Left cardiac atrium (tissue), 4 donors: ENCODE measurements at regions of chr10 and their contacts with region 1.

Region 1: DNA sequence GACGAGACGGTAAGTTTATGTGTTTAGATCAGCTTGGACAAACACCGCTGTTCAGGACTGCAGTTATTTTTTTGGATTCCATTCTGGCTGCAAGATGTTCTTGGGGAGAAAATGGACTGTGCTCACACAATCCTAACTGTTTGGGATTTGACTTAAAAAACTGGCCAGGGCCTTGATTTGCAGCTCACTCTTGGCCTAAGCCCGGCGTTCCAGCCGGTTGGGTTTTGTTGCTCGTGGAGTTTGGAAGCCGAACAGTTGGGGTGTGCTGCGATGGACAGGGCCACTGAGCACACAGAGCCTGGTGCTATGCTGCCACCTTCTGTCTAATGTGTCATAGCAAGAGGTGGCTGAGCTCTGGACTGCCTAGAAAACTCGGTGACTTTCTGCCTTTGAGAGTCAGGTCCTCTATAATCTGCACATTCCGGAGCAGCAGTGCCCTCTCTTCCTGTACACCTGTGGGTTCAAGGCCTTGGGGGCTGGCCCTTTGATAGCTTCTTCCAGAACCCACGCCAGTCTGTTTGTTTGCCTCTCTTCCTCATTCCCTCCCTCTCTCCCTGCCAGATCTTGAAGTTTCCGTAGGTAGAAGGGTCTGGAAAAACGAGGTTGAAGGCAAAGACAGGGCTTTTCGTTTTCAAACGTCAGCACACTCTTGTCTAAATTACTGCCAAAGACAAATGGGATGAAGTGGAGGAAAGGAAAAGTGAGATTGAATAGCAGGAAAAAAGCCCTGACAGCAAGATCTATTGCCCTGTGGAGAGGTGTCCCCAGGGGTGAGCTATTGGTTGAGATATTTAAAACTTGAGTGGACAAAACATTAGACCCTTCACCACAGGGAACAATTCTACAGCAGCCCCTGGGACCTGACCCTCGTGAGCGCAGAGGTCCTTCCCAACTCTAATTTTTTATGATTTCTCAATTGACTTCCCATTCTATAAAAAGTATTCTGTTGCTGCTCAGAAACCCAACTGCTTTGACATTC is 167.5 kb upstream of the HABP2 start:
- DNase-seq: peak; percentile 85
- ATAC-seq: peak; percentile 98 to 99

Region 2: DNA sequence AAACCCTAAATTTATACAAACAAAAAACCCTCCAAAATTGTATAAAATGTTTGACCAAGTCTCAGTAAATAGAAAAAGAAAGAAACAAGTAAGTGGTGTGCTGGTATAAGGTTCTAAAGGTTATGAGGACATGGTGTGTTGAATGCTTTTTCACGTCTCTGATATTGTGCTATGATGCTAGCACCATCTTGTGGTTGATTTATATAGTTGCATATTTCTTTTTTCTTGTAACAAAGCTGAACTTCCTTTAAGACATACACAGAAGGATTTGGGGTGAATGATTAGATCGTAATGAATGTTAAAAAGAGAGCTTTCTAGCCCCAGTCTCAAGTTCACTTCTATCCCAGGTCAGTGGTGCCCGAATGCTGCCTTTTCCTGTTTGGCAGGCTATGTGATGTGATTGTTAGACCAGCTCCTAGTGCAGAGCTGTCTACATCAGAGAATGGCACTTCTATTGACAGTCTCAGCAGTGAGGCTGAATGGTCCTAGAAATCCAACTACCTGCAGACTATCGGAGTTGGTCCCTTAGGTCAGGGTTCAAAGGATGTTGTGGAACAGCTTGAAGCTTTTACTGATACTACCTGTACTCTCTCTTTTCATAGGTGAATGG is 913.3 kb before region 1 on chr10:
- intact Hi-C with region 1: loop called in 1 of 2 experiments (anchors 5 kb)
- DNase-seq: no peak
- ATAC-seq: peak; percentile 53 to 59

Region 3: DNA sequence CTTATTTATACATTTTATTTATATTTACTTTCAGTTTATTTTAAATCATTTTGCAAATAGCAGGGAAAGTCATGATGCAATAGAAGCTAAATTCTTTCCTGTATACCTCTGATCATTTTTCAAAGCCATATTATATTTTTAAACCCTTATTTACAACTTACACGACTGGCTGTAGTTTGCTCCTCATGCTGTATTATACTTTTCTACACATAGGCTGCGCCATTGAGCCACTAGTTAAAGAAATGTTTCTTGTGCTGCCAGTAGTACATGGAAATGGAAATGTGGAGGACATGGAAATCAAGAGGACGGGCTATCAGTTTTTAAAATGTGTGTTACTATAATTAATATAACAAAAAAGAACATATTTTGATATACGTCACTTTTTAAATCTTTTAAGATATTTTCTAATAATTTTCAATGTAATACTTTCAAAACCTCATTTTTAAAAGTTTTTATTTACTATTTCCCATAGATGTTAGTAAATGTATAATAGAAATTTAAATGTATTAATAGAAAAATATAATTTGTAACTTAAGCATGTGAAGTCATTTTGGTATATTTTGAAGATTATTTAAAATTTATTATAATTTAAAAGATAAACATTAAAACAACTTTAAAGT is 819.8 kb before region 1 on chr10:
- intact Hi-C with region 1: loop called in 1 of 2 experiments (anchors 10 kb)
- DNase-seq: no peak
- ATAC-seq: peak; percentile 41 to 55

Region 4: GRCh38 chr10:112721080-112721698 is 664.1 kb before region 1 on chr10:
- intact Hi-C with region 1: loop called (anchors 2 to 10 kb)
- DNase-seq: no peak
- ATAC-seq: peak; percentile 53 to 68

Region 5: GRCh38 chr10:113139699-113140098 is 245.6 kb before region 1 on chr10:
- intact Hi-C with region 1: loop called in 1 of 2 experiments (anchors 10 kb)
- DNase-seq: no peak
- ATAC-seq: no peak

Region 6: GRCh38 chr10:113273181-113274163 is 111.8 kb before region 1 on chr10:
- intact Hi-C with region 1: no loop called
- DNase-seq: peak; percentile 58
- ATAC-seq: peak; percentile 76